ENCODE measurements at regions of chr19 and their contacts with region 1.

Region 1: DNA sequence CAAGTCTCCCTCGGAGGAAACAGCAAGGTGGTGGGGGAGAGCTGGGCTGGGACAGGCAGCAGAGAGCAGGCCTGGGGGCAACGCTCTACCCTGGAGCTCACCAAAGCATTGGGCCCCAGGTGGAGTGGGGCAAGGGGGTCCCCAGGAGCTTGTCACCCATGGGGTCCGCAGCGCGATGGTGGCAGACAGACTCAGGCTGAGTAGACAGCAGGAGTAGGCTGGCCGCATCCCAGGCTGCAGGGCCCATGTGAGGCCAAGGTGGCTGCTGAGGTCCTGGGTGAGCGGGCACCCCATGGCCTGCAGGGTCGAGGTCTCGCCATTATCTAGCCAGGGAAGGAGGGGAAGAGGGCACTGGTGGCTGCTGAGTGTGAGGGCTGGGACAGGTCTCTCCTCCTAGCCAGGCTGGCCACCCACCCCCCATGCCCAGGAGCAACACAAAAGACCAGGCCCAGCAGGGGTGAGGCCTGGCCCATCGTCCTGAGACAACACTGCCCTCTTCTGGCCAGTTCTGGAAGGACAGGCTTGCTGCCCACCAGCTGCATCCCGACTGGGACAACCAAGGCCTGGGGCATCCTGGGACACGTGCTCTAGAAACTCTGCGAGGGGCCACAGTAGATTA is 33.1 kb downstream of the CEBPG start:
- DNase-seq: peak in 41 of 42 donors; percentile 55 to 91 (median 78)

Region 2: DNA sequence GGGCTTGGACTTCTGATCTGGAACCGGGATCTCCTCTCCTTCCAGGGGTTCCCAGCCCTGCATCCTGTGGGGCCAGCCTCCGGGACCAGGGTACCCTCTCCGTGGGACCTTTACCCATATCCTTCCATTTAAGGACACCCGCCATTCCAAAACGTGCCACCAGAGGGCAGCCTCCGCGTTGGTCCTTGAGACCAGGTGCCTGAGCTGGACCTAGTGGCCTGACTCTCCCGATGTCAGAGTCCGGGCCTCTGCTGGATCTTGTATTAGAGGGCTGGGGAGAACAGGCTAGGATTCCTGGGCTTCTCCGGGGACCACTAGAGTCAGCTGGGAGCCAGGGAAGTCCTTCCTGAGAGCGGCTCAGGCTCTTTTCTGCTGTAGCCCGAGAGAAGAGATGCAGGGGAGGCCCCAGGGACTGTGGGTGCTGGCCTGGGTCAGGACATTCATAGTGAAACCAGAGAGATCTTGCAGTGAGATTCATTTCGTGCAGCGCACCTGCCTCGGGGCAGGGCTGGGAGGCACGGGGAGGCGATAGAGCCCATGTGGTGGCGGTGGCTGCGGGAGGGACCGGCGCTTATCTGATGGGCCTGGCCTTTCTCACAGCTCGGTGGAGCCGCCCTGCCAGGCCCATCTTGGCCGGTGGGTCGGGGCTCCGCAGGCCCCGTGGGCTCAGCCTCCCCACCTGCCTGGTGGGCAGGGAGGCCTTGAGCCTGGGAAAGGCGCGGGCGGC is 171.2 kb before region 1 on chr19:
- intact Hi-C with region 1: loop called (anchors 2 kb)
- DNase-seq: peak in 41 of 42 donors; percentile 59 to 94 (median 84)

Region 3: GRCh38 chr19:33947265-33947964 is 540.8 kb after region 1 on chr19:
- intact Hi-C with region 1: no loop called
- DNase-seq: peak in 1 of 42 donors; percentile 15